ENCODE measurements at regions of chr9 and their contacts with region 1.

Region 1: DNA sequence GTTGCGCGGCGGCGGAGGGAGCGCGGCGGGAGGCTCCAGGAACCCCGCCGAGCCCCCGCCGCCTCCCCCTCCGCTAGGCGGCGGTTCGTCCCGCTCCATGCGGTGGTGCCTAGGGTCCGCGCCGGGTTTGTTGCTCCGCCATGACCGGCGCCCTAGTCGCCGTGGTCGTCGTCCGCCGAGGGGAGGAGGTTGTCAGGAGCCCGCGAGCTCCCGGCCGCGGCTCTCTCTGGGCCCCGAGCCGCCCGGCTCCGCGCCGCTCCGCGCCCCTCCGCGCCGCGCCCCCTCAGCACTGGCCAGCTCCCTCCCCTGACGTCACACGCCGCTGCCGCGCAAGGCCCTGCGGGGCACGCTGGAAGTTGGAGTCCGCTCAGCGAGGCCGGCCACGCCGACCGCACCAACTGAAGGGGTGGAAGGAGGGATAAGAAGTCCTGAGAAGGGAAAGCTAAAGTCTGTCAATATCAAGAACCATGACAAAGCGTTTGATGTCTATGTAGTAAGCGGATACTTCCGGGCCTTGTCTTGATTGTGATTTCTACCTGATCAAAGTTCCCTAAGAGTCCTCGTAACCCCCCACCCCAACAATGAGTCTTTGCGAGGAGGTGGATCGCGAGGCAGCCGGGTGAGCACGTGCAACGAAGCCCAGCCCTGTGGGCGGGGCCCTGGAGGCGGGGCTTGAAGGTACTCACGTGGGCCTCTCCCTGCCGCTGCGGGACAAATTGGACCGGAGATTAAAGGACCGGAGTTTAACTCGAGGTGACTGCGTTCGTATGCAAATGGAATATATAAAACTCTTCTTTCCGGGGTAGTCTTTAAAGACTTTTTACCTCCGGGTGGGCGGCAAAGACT is at the start of gene NR6A1:
- DNase-seq: peak; percentile 98
- H3K4me3 ChIP-seq: peak within 1 kb of the TSS; percentile 84
- H3K27ac ChIP-seq: peak within 1 kb of the TSS; percentile 60
- H3K4me1 ChIP-seq: peaks cover 43% of the 10 kb centered on the region
- CTCF ChIP-seq: peak; percentile 53
- total RNA-seq, gene NR6A1: 13.0 and 17.5 TPM in 2 replicates

Region 2: DNA sequence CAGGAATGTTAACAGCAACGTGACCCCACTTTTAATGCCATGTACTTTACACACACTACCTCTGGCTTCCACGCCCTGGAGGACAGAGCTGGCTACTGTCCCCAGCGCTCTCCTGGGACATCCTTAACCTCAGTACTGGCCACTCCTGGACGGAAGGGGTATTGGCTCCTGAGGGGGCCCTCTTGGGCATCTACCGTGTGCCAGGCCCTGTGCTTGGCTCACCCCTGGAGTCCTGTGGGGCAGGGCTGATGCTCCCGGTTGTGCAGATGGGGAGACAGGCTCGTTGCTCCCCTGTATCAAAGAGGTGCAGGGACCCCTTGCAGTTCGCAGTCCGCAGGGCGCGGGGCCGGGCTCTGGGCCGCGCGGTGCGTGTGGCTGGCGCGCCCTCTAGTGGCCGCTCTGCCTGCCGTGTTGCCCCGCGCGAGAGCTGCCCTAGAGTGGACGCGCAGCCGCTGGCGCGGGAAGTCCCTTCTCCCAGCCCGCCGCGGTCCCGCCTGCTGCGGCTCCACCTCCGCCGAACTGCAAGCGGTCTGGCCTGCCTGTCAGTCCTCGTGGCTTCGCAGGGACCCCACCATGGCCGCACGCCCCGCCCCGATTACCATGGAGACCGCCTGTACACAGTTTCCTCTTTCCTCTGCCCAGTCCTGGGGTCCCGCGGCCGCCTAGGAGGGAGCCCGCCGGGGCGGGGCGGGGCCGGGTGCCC is 81.7 kb after region 1 on chr9 and contains the start of gene WDR38:
- CTCF ChIA-PET with region 1: interaction called, 5 read pairs
- POLR2A ChIA-PET with region 1: interaction called, 6 read pairs
- intact Hi-C with region 1: loop called (anchors 1 kb)
- DNase-seq: peak; percentile 76
- H3K4me3 ChIP-seq: peak within 1 kb of the TSS; percentile 63
- H3K27ac ChIP-seq: no peak within 1 kb of the TSS
- H3K4me1 ChIP-seq: peaks cover 11% of the 10 kb centered on the region
- CTCF ChIP-seq: peak; percentile 94
- total RNA-seq, gene WDR38: not detected in 2 replicates

Region 3: DNA sequence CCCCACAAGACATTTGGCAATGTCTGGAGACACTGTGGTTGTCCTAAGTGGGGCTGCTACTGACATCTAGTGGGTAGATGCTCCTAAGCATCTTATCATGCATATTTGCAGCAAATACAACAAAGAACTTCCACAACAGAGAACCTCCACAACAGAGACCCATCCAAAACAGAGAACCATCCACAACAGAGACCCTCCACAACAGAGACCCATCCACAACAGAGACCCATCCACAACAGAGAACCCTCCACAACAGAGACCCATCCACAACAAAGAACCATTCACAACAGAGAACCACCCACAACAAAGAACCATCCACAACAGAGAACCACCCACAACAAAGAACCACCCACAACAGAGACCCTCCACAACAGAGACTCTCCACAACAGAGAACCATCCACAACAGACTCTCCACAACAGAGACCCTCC is 123.5 kb after region 1 on chr9:
- CTCF ChIA-PET with region 1: no interaction called
- POLR2A ChIA-PET with region 1: interaction called, 3 read pairs
- intact Hi-C with region 1: loop called (anchors 1 kb)
- DNase-seq: peak; percentile 83
- H3K4me3 ChIP-seq: no peak overlapping the region
- H3K27ac ChIP-seq: no peak overlapping the region
- H3K4me1 ChIP-seq: peaks cover 8% of the 10 kb centered on the region
- CTCF ChIP-seq: peak; percentile 88

Region 4: GRCh38 chr9:125143375-125144090 is 372.3 kb after region 1 on chr9 and contains the start of gene SCAI:
- CTCF ChIA-PET with region 1: no interaction called
- POLR2A ChIA-PET with region 1: no interaction called
- intact Hi-C with region 1: loop called (anchors 2 kb)
- DNase-seq: peak; percentile 99
- H3K4me3 ChIP-seq: peak within 1 kb of the TSS; percentile 82
- H3K27ac ChIP-seq: peak within 1 kb of the TSS; percentile 40
- H3K4me1 ChIP-seq: peaks cover 22% of the 10 kb centered on the region
- CTCF ChIP-seq: peak; percentile 91
- total RNA-seq, gene SCAI: 23.8 and 25.0 TPM in 2 replicates

Region 5: GRCh38 chr9:125763394-125763801 is 992.2 kb after region 1 on chr9:
- CTCF ChIA-PET with region 1: no interaction called
- POLR2A ChIA-PET with region 1: no interaction called
- intact Hi-C with region 1: loop called (anchors 10 kb)
- DNase-seq: no peak
- H3K4me3 ChIP-seq: no peak overlapping the region
- H3K27ac ChIP-seq: no peak overlapping the region
- H3K4me1 ChIP-seq: peaks cover 19% of the 10 kb centered on the region
- CTCF ChIP-seq: no peak

Measured in OCI-LY7 (cell line).